ENCODE measurements at regions of chr4 and their contacts with region 1.

Region 1: GRCh38 chr4:124946696-124947095 is 234.2 kb upstream of the ANKRD50 start:
- DNase-seq: no peak
- ATAC-seq: no peak
- H3K4me3 ChIP-seq: no peak overlapping the region
- H3K4me3 Mint-ChIP-seq: no peak overlapping the region
- H3K27ac ChIP-seq: no peak overlapping the region
- H3K27ac Mint-ChIP-seq: no peak overlapping the region
- H3K4me1 ChIP-seq: no peaks in the 10 kb centered on the region
- H3K4me1 Mint-ChIP-seq: no peaks in the 10 kb centered on the region
- H3K27me3 ChIP-seq: no peaks in the 10 kb centered on the region
- H3K27me3 Mint-ChIP-seq: no peaks in the 10 kb centered on the region
- CTCF ChIP-seq: no peak

Region 2: GRCh38 chr4:123986268-123986798 is 960.4 kb before region 1 on chr4:
- CTCF ChIA-PET with region 1: no interaction called
- POLR2A ChIA-PET with region 1: no interaction called
- intact Hi-C with region 1: no loop called
- DNase-seq: no peak
- ATAC-seq: no peak
- H3K4me3 ChIP-seq: no peak overlapping the region
- H3K4me3 Mint-ChIP-seq: no peak overlapping the region
- H3K27ac ChIP-seq: no peak overlapping the region
- H3K27ac Mint-ChIP-seq: no peak overlapping the region
- H3K4me1 ChIP-seq: no peaks in the 10 kb centered on the region
- H3K4me1 Mint-ChIP-seq: no peaks in the 10 kb centered on the region
- H3K27me3 ChIP-seq: no peaks in the 10 kb centered on the region
- H3K27me3 Mint-ChIP-seq: no peaks in the 10 kb centered on the region
- CTCF ChIP-seq: no peak

Region 3: GRCh38 chr4:124980276-124980752 is 33.6 kb after region 1 on chr4:
- CTCF ChIA-PET with region 1: no interaction called
- POLR2A ChIA-PET with region 1: no interaction called
- intact Hi-C with region 1: loop called in 1 of 2 experiments (anchors 1 kb)
- DNase-seq: no peak
- ATAC-seq: no peak
- H3K4me3 ChIP-seq: no peak overlapping the region
- H3K4me3 Mint-ChIP-seq: no peak overlapping the region
- H3K27ac ChIP-seq: no peak overlapping the region
- H3K27ac Mint-ChIP-seq: no peak overlapping the region
- H3K4me1 ChIP-seq: no peaks in the 10 kb centered on the region
- H3K4me1 Mint-ChIP-seq: no peaks in the 10 kb centered on the region
- H3K27me3 ChIP-seq: no peaks in the 10 kb centered on the region
- H3K27me3 Mint-ChIP-seq: no peaks in the 10 kb centered on the region
- CTCF ChIP-seq: no peak

Region 4: DNA sequence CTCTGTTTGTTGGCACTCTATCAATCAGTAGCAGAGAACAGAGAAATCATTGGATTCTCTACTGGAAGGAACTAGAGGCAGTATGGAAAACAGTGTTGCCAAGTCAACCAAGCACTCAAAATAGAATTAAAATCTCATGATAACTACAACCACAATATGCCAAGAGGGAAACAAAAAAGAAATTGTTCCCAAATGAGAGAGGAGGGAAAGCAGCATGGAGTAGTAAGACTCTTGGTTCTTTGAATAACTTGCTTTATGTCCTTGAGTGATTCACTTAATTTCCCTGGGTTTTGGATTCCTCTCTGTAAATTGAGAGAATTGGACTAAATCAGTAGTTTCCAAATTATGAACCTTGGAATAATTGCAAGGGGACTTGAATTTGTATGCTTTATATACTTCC is 51.3 kb after region 1 on chr4:
- CTCF ChIA-PET with region 1: no interaction called
- POLR2A ChIA-PET with region 1: no interaction called
- intact Hi-C with region 1: no loop called
- DNase-seq: no peak
- ATAC-seq: no peak
- H3K4me3 ChIP-seq: no peak overlapping the region
- H3K4me3 Mint-ChIP-seq: no peak overlapping the region
- H3K27ac ChIP-seq: no peak overlapping the region
- H3K27ac Mint-ChIP-seq: no peak overlapping the region
- H3K4me1 ChIP-seq: no peaks in the 10 kb centered on the region
- H3K4me1 Mint-ChIP-seq: no peaks in the 10 kb centered on the region
- H3K27me3 ChIP-seq: no peaks in the 10 kb centered on the region
- H3K27me3 Mint-ChIP-seq: no peaks in the 10 kb centered on the region
- CTCF ChIP-seq: no peak

Region 5: GRCh38 chr4:126106658-126107057 is 1160.0 kb after region 1 on chr4:
- CTCF ChIA-PET with region 1: no interaction called
- POLR2A ChIA-PET with region 1: no interaction called
- intact Hi-C with region 1: no loop called
- DNase-seq: no peak
- ATAC-seq: no peak
- H3K4me3 ChIP-seq: no peak overlapping the region
- H3K4me3 Mint-ChIP-seq: no peak overlapping the region
- H3K27ac ChIP-seq: no peak overlapping the region
- H3K27ac Mint-ChIP-seq: no peak overlapping the region
- H3K4me1 ChIP-seq: no peaks in the 10 kb centered on the region
- H3K4me1 Mint-ChIP-seq: no peaks in the 10 kb centered on the region
- H3K27me3 ChIP-seq: no peaks in the 10 kb centered on the region
- H3K27me3 Mint-ChIP-seq: no peaks in the 10 kb centered on the region
- CTCF ChIP-seq: no peak